Activated B cell treated with CpG ODN at 0.5 μM for 24 hours (primary cell): ENCODE measurements at regions of chr18 and their contacts with region 1.

Region 1: DNA sequence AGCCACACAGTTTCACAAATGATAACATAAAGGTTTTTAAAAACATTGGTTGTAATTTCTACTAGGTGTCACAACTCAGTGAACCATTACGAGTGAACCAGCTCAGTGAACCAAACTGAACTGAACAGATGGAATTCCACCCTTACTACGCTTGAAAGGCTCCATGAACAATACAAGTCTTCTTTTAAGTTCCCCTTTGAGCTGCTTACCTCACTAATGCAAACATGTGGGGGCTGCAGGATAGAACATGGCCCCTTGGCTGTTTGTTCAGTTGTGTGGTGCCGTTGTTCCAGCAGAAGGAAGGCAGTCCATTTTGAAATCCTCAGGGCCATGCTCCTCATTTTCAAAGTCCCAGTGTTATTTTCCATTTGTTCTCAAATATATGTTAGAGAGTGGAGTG is 30.7 kb upstream of the KLHL14 start:
- DNase-seq: no peak
- ATAC-seq: peak; percentile 88
- H3K4me3 Mint-ChIP-seq: peak overlapping the region; percentile 75
- H3K27ac Mint-ChIP-seq: peak overlapping the region; percentile 98
- H3K4me1 Mint-ChIP-seq: peaks cover 53% of the 10 kb centered on the region
- H3K27me3 Mint-ChIP-seq: no peaks in the 10 kb centered on the region
- CTCF ChIP-seq: no peak

Region 2: GRCh38 chr18:32261003-32261402 is 542.6 kb before region 1 on chr18:
- CTCF ChIA-PET with region 1: no interaction called
- POLR2A ChIA-PET with region 1: no interaction called
- intact Hi-C with region 1: no loop called
- DNase-seq: no peak
- ATAC-seq: no peak
- H3K4me3 Mint-ChIP-seq: no peak overlapping the region
- H3K27ac Mint-ChIP-seq: no peak overlapping the region
- H3K4me1 Mint-ChIP-seq: no peaks in the 10 kb centered on the region
- H3K27me3 Mint-ChIP-seq: peaks cover 20% of the 10 kb centered on the region
- CTCF ChIP-seq: no peak

Region 3: DNA sequence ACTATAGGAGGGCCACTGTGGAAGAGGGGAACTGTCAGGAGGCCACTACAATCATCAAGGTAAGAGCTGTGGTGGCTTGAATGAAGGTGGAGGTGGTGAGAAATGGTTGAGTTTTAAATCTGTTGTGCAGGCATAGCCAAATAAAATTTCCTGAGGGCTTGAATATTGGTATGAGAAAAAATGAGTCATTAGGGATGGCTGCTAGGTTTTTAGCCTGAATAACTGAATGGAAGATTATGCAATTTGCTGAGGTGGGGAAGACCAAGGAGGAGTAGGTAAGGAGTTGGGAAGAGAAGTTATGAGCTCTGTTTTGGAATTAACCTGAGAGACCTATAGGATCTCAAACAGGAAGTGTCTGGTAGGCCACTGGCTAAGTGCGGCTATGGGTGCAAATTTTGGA is 114.7 kb before region 1 on chr18:
- CTCF ChIA-PET with region 1: no interaction called
- POLR2A ChIA-PET with region 1: no interaction called
- intact Hi-C with region 1: no loop called
- DNase-seq: no peak
- ATAC-seq: no peak
- H3K4me3 Mint-ChIP-seq: no peak overlapping the region
- H3K27ac Mint-ChIP-seq: no peak overlapping the region
- H3K4me1 Mint-ChIP-seq: peaks cover 6% of the 10 kb centered on the region
- H3K27me3 Mint-ChIP-seq: no peaks in the 10 kb centered on the region
- CTCF ChIP-seq: no peak

Region 4: DNA sequence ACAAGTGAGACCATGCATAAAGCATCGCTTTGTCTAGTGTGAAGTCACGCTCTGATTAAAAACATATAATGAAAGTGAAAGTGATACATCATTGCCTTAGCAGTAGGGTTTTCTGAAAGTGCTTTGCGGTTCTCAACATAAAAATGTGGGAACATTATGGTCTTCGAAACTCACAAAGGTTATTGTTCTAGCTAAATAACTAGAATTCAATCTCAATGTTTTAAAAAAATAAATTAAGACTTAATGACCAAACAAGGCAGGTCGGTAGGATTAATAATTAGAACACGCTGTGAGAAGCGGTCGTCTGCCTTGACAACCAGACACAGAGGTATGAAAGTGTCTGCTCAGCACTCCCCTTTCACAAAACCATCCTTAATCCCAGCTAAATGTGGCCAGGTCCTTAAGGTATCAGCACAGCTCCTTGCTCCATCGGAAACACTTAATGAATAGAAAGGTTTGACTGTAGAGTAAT is 72.9 kb before region 1 on chr18:
- CTCF ChIA-PET with region 1: no interaction called
- POLR2A ChIA-PET with region 1: interaction called, 3 read pairs
- intact Hi-C with region 1: loop called (anchors 1 kb)
- DNase-seq: no peak
- ATAC-seq: peak; percentile 88
- H3K4me3 Mint-ChIP-seq: peak overlapping the region; percentile 72
- H3K27ac Mint-ChIP-seq: peak overlapping the region; percentile 86
- H3K4me1 Mint-ChIP-seq: peaks cover 50% of the 10 kb centered on the region
- H3K27me3 Mint-ChIP-seq: no peaks in the 10 kb centered on the region
- CTCF ChIP-seq: no peak

Region 5: GRCh38 chr18:32760391-32760790 is 43.2 kb before region 1 on chr18:
- CTCF ChIA-PET with region 1: no interaction called
- POLR2A ChIA-PET with region 1: interaction called, 8 read pairs
- intact Hi-C with region 1: loop called (anchors 1 kb)
- DNase-seq: peak; percentile 57
- ATAC-seq: peak; percentile 97
- H3K4me3 Mint-ChIP-seq: peak overlapping the region; percentile 60
- H3K27ac Mint-ChIP-seq: peak overlapping the region; percentile 83
- H3K4me1 Mint-ChIP-seq: peaks cover 93% of the 10 kb centered on the region
- H3K27me3 Mint-ChIP-seq: no peaks in the 10 kb centered on the region
- CTCF ChIP-seq: no peak

Region 6: GRCh38 chr18:32815881-32816280 is 12.3 kb after region 1 on chr18:
- CTCF ChIA-PET with region 1: no interaction called
- POLR2A ChIA-PET with region 1: interaction called, 4 read pairs
- intact Hi-C with region 1: loop called (anchors 1 kb)
- DNase-seq: no peak
- ATAC-seq: peak; percentile 34
- H3K4me3 Mint-ChIP-seq: peak overlapping the region; percentile 6
- H3K27ac Mint-ChIP-seq: peak overlapping the region; percentile 14
- H3K4me1 Mint-ChIP-seq: peaks cover 15% of the 10 kb centered on the region
- H3K27me3 Mint-ChIP-seq: no peaks in the 10 kb centered on the region
- CTCF ChIP-seq: no peak

Region 7: GRCh38 chr18:32868406-32868805 is 64.8 kb after region 1 on chr18:
- CTCF ChIA-PET with region 1: no interaction called
- POLR2A ChIA-PET with region 1: interaction called, 27 read pairs
- intact Hi-C with region 1: loop called (anchors 1 kb)
- DNase-seq: no peak
- ATAC-seq: peak; percentile 62
- H3K4me3 Mint-ChIP-seq: peak overlapping the region; percentile 72
- H3K27ac Mint-ChIP-seq: peak overlapping the region; percentile 95
- H3K4me1 Mint-ChIP-seq: peaks cover 90% of the 10 kb centered on the region
- H3K27me3 Mint-ChIP-seq: no peaks in the 10 kb centered on the region
- CTCF ChIP-seq: no peak